ENCODE measurements at regions of chr2 and their contacts with region 1.

Region 1: DNA sequence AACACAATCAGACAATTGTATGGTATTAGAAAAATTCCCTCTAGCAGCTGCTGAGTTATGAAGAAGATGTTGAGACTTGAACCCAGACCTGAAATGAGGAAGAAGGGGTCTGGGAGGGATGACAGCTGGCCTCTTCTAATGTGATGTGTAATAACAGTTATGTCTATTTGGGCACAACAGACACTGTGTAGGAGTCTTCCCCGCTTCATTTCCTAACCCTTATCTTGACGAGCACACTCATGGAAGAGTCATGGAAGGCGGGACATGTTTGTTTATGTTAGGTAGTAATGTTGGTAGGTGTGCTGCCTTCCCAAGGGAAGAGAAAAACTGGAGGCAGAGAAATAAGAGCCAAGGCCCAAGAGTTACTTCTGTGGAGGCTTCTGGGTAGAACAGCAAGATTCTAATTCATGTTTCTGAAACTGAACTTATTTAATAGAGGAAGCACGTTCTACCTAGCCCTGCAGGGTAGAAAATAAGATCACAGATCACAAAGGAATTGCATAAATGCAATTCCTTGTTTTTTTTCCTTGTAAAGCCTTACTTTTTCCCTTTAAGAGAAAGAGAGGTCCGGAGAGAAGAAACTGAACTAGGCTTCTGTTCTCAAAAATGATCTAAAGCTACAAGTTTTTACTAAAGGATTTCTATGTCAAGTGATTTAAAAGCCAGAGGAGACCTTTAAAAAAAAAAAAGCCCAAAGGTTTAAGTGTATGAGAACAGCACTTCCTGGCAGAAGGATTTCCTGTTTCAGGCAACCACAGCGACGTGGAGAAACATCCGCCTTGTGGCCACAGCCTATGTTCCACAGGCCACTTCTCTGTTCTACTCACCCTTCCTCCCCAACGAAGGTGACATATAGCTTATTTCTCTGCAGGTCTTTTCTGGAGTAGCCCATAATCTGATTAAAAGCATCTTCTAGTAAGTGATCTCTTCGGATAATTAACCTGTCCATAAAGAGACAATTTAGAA is 68.5 kb upstream of the STK17B start:
- DNase-seq: peak; percentile 84 to 90 (median 87)
- H3K4me3 ChIP-seq: peak overlapping the region in 1 of 2 donors; percentile 44
- H3K4me3 Mint-ChIP-seq: peak overlapping the region; percentile 65 to 82 (median 78)
- H3K27ac ChIP-seq: peak overlapping the region; percentile 56
- H3K27ac Mint-ChIP-seq: peak overlapping the region; percentile 95 to 98 (median 96)
- H3K4me1 ChIP-seq: peaks cover 76% of the 10 kb centered on the region
- H3K4me1 Mint-ChIP-seq: peaks cover 62 to 86% (median 70%) of the 10 kb centered on the region in 4 donors
- H3K27me3 ChIP-seq: no peaks in the 10 kb centered on the region
- H3K27me3 Mint-ChIP-seq: no peaks in the 10 kb centered on the region

Region 2: DNA sequence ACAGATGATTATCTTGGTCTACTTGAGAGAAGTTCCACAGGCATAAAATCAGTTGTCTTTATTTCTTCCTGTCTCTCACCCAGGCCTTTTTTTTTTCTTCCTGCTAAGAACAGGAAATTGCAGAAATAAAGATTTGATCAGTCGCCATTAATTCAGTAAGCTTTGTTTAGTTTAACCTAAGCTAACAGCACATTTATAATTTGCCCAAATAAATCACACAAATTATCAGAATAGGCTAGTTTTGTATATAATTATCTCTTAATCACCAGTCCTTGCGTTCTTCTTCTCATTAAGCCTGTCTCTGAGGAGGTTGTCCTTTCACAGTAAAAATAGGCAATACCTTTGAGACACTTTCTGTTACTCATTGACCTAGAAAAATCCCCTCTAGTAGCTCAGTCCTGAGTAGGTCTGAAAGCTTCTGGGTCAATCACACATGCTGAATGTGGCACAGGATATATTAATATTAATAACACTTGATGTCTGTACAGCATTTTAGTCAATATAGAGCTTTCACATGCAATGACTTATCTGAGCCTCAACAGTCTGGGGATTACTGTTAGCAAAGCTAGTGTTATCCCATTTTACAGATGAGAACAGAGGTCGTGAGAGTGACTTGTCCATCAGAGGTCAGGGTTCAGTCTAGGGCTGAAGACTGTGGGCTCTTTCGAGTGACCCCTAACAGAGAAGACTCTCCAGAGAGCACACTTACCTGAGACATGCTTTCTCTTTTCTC is 57.3 kb before region 1 on chr2:
- CTCF ChIA-PET with region 1: interaction called, 21 read pairs
- POLR2A ChIA-PET with region 1: interaction called, 90 read pairs
- intact Hi-C with region 1: no loop called
- DNase-seq: peak in 1 of 5 donors; percentile 53
- H3K4me3 ChIP-seq: peak overlapping the region; percentile 2 to 7
- H3K4me3 Mint-ChIP-seq: peak overlapping the region; percentile 64 to 85 (median 74)
- H3K27ac ChIP-seq: peak overlapping the region; percentile 55
- H3K27ac Mint-ChIP-seq: peak overlapping the region; percentile 91 to 98 (median 95)
- H3K4me1 ChIP-seq: peaks cover 92% of the 10 kb centered on the region
- H3K4me1 Mint-ChIP-seq: peaks cover 65 to 93% (median 80%) of the 10 kb centered on the region in 4 donors
- H3K27me3 ChIP-seq: no peaks in the 10 kb centered on the region
- H3K27me3 Mint-ChIP-seq: no peaks in the 10 kb centered on the region

Region 3: GRCh38 chr2:196200557-196200956 is 39.3 kb before region 1 on chr2:
- CTCF ChIA-PET with region 1: interaction called, 4 read pairs
- POLR2A ChIA-PET with region 1: interaction called, 20 read pairs
- intact Hi-C with region 1: no loop called
- DNase-seq: peak; percentile 45 to 55 (median 50)
- H3K4me3 ChIP-seq: peak overlapping the region; percentile 43 to 57
- H3K4me3 Mint-ChIP-seq: peak overlapping the region; percentile 74 to 92 (median 80)
- H3K27ac ChIP-seq: peak overlapping the region; percentile 70
- H3K27ac Mint-ChIP-seq: peak overlapping the region; percentile 72 to 98 (median 95)
- H3K4me1 ChIP-seq: peaks cover 63% of the 10 kb centered on the region
- H3K4me1 Mint-ChIP-seq: peaks cover 37 to 58% (median 44%) of the 10 kb centered on the region in 4 donors
- H3K27me3 ChIP-seq: no peaks in the 10 kb centered on the region
- H3K27me3 Mint-ChIP-seq: no peaks in the 10 kb centered on the region

Region 4: GRCh38 chr2:196205881-196206435 is 33.9 kb before region 1 on chr2:
- CTCF ChIA-PET with region 1: interaction called, 4 read pairs
- POLR2A ChIA-PET with region 1: interaction called, 31 read pairs
- intact Hi-C with region 1: loop called (anchors 1 kb)
- DNase-seq: no peak
- H3K4me3 ChIP-seq: no peak overlapping the region
- H3K4me3 Mint-ChIP-seq: no peak overlapping the region
- H3K27ac ChIP-seq: no peak overlapping the region
- H3K27ac Mint-ChIP-seq: peak overlapping the region in 3 of 7 donors; percentile 14 to 85 (median 24)
- H3K4me1 ChIP-seq: peaks cover 53% of the 10 kb centered on the region
- H3K4me1 Mint-ChIP-seq: peaks cover 46 to 55% (median 49%) of the 10 kb centered on the region in 4 donors
- H3K27me3 ChIP-seq: no peaks in the 10 kb centered on the region
- H3K27me3 Mint-ChIP-seq: no peaks in the 10 kb centered on the region

Region 5: GRCh38 chr2:196268538-196269338 is 28.8 kb after region 1 on chr2:
- CTCF ChIA-PET with region 1: interaction called, 7 read pairs
- POLR2A ChIA-PET with region 1: interaction called, 64 read pairs
- intact Hi-C with region 1: loop called (anchors 1 kb)
- DNase-seq: peak in 3 of 5 donors; percentile 26 to 55 (median 31)
- H3K4me3 ChIP-seq: no peak overlapping the region
- H3K4me3 Mint-ChIP-seq: peak overlapping the region; percentile 36 to 89 (median 81)
- H3K27ac ChIP-seq: peak overlapping the region; percentile 45
- H3K27ac Mint-ChIP-seq: peak overlapping the region; percentile 73 to 94 (median 84)
- H3K4me1 ChIP-seq: peaks cover 69% of the 10 kb centered on the region
- H3K4me1 Mint-ChIP-seq: peaks cover 40 to 71% (median 53%) of the 10 kb centered on the region in 4 donors
- H3K27me3 ChIP-seq: no peaks in the 10 kb centered on the region
- H3K27me3 Mint-ChIP-seq: no peaks in the 10 kb centered on the region